HCT116 (cell line): ENCODE measurements at regions of chr10 and their contacts with region 1.

Region 1: GRCh38 chr10:127577376-127577775 is 28.3 kb downstream of the NPS start:
- DNase-seq: no peak
- ATAC-seq: no peak
- H3K4me3 ChIP-seq: no peak overlapping the region
- H3K27ac ChIP-seq: no peak overlapping the region
- H3K4me1 ChIP-seq: no peaks in the 10 kb centered on the region
- H3K27me3 ChIP-seq: peaks cover 61% of the 10 kb centered on the region
- CTCF ChIP-seq: peak in 2 of 3 experiments; percentile 34 to 60; a peak in 3 of 6 replicates
- POLR2A ChIP-seq: no peak
- RAD21 ChIP-seq: peak; percentile 53

Region 2: DNA sequence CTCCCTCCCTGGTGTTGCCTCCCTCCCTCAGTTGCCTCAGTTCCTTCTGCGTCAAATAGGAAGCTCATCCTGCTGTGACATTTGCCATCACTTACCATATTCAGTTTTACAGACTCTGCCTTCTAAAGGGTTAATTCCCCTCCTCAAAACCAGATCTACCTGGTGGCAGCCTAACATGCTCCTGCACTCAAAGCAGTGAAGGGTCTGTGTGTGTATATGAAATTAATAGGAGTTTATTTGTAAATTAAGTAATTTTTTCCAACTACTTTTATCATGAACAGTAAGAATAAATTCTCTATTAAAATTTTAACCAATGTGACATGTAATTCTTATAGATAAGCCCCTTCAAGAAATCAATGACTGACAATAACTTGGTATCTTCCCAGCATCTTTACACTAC is 222.4 kb before region 1 on chr10:
- CTCF ChIA-PET with region 1: no interaction called
- POLR2A ChIA-PET with region 1: no interaction called
- RAD21 ChIA-PET with region 1: no interaction called
- intact Hi-C with region 1: loop called (anchors 5 kb)
- DNase-seq: peak; percentile 3
- ATAC-seq: peak; percentile 59
- H3K4me3 ChIP-seq: no peak overlapping the region
- H3K27ac ChIP-seq: no peak overlapping the region
- H3K4me1 ChIP-seq: no peaks in the 10 kb centered on the region
- H3K27me3 ChIP-seq: no peaks in the 10 kb centered on the region
- CTCF ChIP-seq: peak; percentile 51 to 77 (median 74); a peak in 5 of 6 replicates
- POLR2A ChIP-seq: no peak
- RAD21 ChIP-seq: peak; percentile 60

Region 3: GRCh38 chr10:127485153-127485857 is 92.1 kb before region 1 on chr10:
- CTCF ChIA-PET with region 1: no interaction called
- POLR2A ChIA-PET with region 1: no interaction called
- RAD21 ChIA-PET with region 1: no interaction called
- intact Hi-C with region 1: no loop called
- DNase-seq: no peak
- ATAC-seq: peak; percentile 75
- H3K4me3 ChIP-seq: no peak overlapping the region
- H3K27ac ChIP-seq: no peak overlapping the region
- H3K4me1 ChIP-seq: no peaks in the 10 kb centered on the region
- H3K27me3 ChIP-seq: peaks cover 71% of the 10 kb centered on the region
- CTCF ChIP-seq: no peak
- POLR2A ChIP-seq: no peak
- RAD21 ChIP-seq: no peak